Vagina (tissue), 2 donors: ENCODE measurements at regions of chr22 and their contacts with region 1.

Region 1: DNA sequence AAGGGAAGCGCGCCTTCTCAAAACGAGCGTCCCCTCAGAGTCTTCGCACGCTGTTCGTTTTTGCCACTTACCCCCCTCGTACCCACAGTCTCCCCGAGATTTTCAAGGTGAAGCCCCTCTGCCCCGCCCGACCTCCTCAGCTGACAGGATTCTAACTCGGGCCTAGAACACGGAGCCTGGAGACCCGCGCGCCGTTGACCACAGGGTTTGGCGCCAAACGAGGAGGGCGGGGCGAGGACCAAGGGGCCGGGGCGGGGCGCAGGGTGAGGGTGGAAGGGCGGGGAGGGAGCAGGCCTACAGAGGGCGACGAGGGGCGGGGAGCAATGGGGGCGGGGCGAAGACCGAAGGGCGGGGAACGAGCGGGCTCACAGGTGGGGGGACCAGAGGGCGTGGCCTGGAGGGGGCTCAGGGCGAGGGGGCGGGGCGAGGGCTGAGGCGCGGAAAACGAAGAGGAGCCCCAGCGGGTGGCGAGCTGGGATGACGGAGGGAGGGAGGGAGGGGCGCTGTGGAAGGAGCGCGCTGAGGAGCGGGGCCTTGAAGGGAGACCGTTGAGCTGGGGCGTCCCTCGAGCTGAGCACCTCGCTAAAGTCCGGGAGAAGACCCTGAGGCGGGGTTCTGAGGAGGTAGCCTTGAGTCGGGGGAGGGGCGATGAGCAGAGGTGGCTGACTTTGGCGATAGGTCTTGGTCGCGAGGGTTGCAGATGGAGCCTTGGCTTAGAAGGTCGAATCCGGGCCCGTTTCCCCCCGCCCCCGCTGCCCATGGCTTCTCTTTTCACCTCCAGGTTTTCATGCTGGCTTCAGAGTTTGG is at the start of gene DMC1:
- DNase-seq: peak in 1 of 2 donors; percentile 96
- H3K4me3 ChIP-seq: peak within 1 kb of the TSS; percentile 62 to 73
- H3K27ac ChIP-seq: peak within 1 kb of the TSS; percentile 88
- H3K4me1 ChIP-seq: peaks cover 13% of the 10 kb centered on the region
- H3K27me3 ChIP-seq: no peaks in the 10 kb centered on the region
- CTCF ChIP-seq: no peak
- POLR2A ChIP-seq: peak in 1 of 2 donors; percentile 55
- total RNA-seq, gene DMC1: 12.3 TPM

Region 2: DNA sequence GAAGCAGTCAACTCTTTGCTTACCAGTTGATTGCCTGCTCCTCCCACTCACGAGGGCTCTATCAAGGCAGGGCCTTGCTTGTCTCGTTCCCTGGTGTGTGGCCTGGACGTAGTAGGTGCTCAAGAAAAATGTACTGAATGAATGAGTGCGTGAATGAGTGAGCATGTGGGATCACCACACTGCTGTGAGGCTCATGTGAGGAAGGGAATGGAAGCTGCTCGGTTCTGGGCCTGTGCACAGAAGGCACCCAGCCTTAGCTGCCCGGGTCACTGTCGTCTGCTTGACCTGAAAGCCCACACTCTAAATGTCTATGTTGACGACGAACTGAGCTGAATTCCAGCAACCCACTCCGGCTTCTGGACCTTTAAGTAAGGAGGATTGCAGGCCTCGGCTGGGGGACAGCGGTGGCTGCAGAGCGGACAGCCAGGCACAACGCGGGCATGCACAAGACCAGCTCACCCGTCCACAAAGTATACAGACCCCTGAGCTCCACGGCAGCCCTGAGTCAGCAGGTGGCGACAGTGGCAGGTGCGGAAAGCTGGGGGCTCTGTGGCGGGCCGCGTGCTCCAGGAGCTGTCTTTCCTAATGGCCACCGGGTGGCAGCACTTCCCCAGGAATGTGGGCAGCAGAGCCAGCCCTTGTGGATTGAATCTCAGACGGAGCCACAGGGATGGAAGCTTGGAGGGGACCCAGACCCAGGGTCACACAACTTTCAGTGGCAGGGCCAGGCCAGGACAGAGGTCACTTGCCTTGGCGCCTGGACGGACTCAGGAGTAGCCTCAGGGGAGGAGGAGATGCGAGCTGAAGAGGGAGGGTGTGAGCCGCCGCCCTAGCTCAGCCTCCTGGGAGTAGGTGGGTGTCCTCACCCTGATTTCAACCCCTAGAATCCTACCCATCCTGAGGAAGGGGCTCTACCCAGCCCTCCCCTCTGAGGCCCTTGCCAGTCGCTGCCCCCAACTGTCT is 518.0 kb before region 1 on chr22:
- intact Hi-C with region 1: loop called (anchors 10 kb)
- DNase-seq: no peak
- H3K4me3 ChIP-seq: no peak overlapping the region
- H3K27ac ChIP-seq: no peak overlapping the region
- H3K4me1 ChIP-seq: peaks cover 6% of the 10 kb centered on the region
- H3K27me3 ChIP-seq: no peaks in the 10 kb centered on the region
- CTCF ChIP-seq: peak; percentile 87 to 90 (median 89)
- POLR2A ChIP-seq: no peak

Region 3: GRCh38 chr22:38398609-38399461 is 171.3 kb before region 1 on chr22:
- intact Hi-C with region 1: loop called (anchors 1 kb)
- DNase-seq: peak in 1 of 2 donors; percentile 91
- H3K4me3 ChIP-seq: peak overlapping the region; percentile 89 to 98
- H3K27ac ChIP-seq: peak overlapping the region; percentile 98
- H3K4me1 ChIP-seq: peaks cover 26% of the 10 kb centered on the region
- H3K27me3 ChIP-seq: no peaks in the 10 kb centered on the region
- CTCF ChIP-seq: no peak
- POLR2A ChIP-seq: peak; percentile 63 to 83